Mammary epithelial cell (primary cell): ENCODE measurements at regions of chr2 and their contacts with region 1.

Region 1: DNA sequence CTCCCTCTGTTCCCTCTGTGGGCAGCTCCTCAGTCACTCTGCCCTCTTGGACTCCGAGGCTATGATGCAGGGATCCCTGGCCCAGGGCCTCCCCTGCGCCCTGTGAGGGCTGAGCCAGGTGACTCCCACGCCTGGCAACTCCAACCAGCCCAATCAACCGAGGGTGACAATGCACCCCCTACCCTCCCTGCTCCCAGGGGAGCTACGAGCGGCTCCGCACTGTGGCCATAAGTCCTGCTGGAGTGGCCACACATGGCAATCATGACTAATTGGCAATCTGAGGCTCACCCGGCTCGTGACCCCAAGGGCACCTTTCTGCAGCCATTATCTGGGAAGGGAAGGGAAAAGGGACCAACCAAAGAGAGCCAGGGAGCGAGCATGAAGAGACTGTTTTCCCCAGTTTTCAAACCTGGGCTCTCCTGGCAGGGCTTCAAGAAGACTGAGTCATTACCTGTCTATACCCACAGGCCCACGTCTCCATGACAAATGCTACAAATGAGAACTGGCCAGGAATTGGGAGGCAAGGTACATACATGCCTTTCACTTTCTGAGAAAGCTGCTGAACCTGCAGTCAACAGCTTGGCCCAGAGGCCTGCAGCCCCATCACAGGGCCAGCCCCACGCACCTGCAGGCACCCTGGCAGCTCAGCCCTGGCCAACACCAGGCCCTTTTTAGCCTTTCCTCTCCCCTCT is 45.1 kb downstream of the RPL31 start:
- DNase-seq: peak; percentile 93
- H3K4me3 ChIP-seq: no peak overlapping the region
- H3K27ac ChIP-seq: peak overlapping the region; percentile 8
- H3K4me1 ChIP-seq: peaks cover 21% of the 10 kb centered on the region
- H3K27me3 ChIP-seq: no peaks in the 10 kb centered on the region
- CTCF ChIP-seq: no peak

Region 2: GRCh38 chr2:100365434-100365833 is 681.8 kb before region 1 on chr2:
- CTCF ChIA-PET with region 1: no interaction called
- dilution Hi-C with region 1: no loop called
- in situ Hi-C with region 1: no loop called
- intact Hi-C with region 1: no loop called
- DNase-seq: peak; percentile 96
- H3K4me3 ChIP-seq: no peak overlapping the region
- H3K27ac ChIP-seq: no peak overlapping the region
- H3K4me1 ChIP-seq: peaks cover 9% of the 10 kb centered on the region
- H3K27me3 ChIP-seq: no peaks in the 10 kb centered on the region
- CTCF ChIP-seq: no peak

Region 3: DNA sequence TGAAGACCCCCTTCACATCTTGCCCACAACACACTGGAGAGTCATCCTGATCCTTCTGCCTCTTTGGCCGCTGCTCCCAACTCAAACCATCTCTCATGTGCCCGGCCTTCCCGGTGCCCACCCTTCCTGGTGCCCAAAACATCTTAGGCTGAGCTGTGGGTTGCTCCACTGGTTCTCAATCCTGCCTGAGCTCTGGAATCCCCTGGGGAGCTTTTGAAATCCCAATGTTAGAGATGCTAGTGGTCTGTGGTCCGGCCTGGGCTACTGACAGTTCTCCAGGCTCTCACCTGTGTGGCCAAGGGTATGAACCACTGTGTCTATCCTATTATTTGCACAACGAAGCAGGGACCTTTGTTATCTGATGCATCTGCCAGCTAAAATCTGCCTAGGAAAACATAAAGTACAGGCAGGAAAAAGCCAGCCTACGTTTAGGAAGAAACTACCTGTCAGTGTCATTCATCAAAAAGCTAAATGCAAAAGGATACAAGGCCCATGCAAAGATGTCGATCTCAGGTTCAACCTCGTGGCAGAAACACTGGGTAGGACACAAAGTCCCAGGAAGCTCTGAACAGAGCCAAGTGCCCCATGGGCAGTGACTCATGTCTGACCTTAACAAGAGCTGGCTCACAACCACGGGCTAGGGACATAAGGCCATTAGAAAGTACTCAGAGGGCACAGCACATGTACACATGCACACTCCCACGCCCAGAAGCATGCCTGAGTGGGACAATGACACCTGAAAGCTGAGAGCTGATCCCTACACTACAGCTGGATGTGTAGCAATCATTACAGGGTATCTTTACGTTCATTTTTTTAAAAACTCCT is 73.2 kb after region 1 on chr2:
- CTCF ChIA-PET with region 1: no interaction called
- dilution Hi-C with region 1: no loop called
- in situ Hi-C with region 1: no loop called
- intact Hi-C with region 1: loop called (anchors 5 kb)
- DNase-seq: peak; percentile 87
- H3K4me3 ChIP-seq: no peak overlapping the region
- H3K27ac ChIP-seq: peak overlapping the region; percentile 62
- H3K4me1 ChIP-seq: peaks cover 52% of the 10 kb centered on the region
- H3K27me3 ChIP-seq: no peaks in the 10 kb centered on the region
- CTCF ChIP-seq: no peak